ENCODE measurements at regions of chr14 and their contacts with region 1.

Region 1: GRCh38 chr14:24246765-24247212 is 4.4 kb upstream of the TINF2 start:
- DNase-seq: peak; percentile 71
- CTCF ChIP-seq: no peak

Region 2: DNA sequence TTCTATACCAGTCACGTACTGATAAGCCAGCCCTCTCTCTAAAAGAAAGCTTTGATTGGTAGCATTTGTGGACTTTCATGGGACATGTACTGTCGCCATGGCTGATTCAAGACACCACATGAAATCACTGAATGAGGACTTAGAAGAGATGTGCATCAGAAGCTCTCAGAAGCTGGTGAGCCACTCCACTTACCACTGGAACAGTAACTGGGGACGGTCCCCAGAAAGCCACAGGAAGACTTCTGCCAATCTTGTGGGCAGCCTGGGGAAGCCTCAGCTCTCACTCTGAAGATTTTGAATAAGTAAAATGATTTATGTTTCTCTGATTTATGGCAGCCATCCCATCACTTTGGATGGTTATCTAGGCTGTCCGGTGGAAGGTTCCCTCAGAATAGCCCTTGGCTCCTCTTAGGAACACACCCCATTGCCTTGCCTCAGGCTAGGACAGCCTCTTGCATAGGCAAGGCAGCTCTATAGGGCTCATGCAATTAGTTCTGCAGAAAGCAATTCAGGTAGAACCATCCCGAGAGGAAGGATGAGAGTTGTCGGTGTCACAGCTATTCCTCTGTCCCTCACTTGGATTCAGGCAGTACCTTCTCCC is 43.0 kb after region 1 on chr14:
- in situ Hi-C with region 1: loop called (anchors 5 kb)
- DNase-seq: peak; percentile 64
- CTCF ChIP-seq: no peak

Measured in GM13976 (cell line).